Calu3 (cell line): ENCODE measurements at regions of chr13 and their contacts with region 1.

Region 1: GRCh38 chr13:33723772-33724435 is 94.0 kb upstream of the RFC3 start:
- DNase-seq: peak; percentile 60
- H3K4me3 Mint-ChIP-seq: no peak overlapping the region
- H3K27ac Mint-ChIP-seq: no peak overlapping the region
- H3K4me1 Mint-ChIP-seq: no peaks in the 10 kb centered on the region
- H3K27me3 Mint-ChIP-seq: no peaks in the 10 kb centered on the region
- CTCF ChIP-seq: no peak

Region 2: DNA sequence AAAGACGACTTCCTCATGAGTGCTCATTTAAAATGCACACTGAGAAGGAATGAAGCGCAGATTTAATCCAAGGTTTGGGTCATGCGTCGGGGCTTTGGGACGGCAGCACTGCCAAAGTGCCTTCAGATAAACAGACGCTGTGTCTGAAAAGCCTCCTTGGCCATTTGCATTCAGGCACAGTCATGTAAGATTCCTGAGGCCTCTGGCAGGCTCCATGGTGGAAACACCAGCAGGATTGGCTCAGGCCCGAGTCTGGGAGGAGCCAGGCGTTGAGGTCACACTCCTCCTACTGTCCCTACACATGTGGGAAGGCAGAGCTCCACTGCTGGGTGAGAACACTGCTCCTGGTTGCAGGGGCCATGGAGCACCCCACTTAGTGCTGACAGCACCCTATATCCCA is 821.0 kb before region 1 on chr13:
- CTCF ChIA-PET with region 1: no interaction called
- intact Hi-C with region 1: no loop called
- DNase-seq: no peak
- H3K4me3 Mint-ChIP-seq: no peak overlapping the region
- H3K27ac Mint-ChIP-seq: no peak overlapping the region
- H3K4me1 Mint-ChIP-seq: peaks cover 10% of the 10 kb centered on the region
- H3K27me3 Mint-ChIP-seq: no peaks in the 10 kb centered on the region
- CTCF ChIP-seq: no peak

Region 3: GRCh38 chr13:33494596-33495204 is 229.2 kb before region 1 on chr13:
- CTCF ChIA-PET with region 1: no interaction called
- intact Hi-C with region 1: no loop called
- DNase-seq: no peak
- H3K4me3 Mint-ChIP-seq: no peak overlapping the region
- H3K27ac Mint-ChIP-seq: peak overlapping the region; percentile 79
- H3K4me1 Mint-ChIP-seq: peaks cover 33% of the 10 kb centered on the region
- H3K27me3 Mint-ChIP-seq: no peaks in the 10 kb centered on the region
- CTCF ChIP-seq: no peak

Region 4: GRCh38 chr13:33542283-33543088 is 181.4 kb before region 1 on chr13:
- CTCF ChIA-PET with region 1: interaction called, 4 read pairs
- intact Hi-C with region 1: loop called (anchors 1 kb)
- DNase-seq: peak; percentile 96
- H3K4me3 Mint-ChIP-seq: peak overlapping the region; percentile 67
- H3K27ac Mint-ChIP-seq: peak overlapping the region; percentile 94
- H3K4me1 Mint-ChIP-seq: peaks cover 11% of the 10 kb centered on the region
- H3K27me3 Mint-ChIP-seq: no peaks in the 10 kb centered on the region
- CTCF ChIP-seq: peak; percentile 68

Region 5: DNA sequence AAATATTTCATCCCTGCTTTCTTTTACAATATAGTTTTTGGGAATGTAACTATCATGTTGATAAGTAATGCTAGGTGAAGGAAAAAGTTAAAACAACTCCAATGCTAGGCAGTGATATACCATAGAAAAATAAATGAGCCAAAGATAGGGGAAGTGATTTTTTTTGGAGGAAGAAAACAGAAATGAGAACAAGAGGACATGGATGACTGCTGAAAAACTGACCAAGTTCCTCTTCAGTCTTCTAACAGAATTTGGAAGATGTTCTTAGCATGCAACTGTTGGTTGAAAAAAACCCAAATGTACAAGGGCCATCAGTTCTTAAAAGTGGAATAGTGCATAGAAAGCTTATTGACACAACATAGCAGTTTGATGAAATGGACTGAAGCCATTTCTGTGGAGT is 175.8 kb before region 1 on chr13:
- CTCF ChIA-PET with region 1: interaction called, 4 read pairs
- intact Hi-C with region 1: loop called (anchors 1 kb)
- DNase-seq: no peak
- H3K4me3 Mint-ChIP-seq: no peak overlapping the region
- H3K27ac Mint-ChIP-seq: no peak overlapping the region
- H3K4me1 Mint-ChIP-seq: no peaks in the 10 kb centered on the region
- H3K27me3 Mint-ChIP-seq: no peaks in the 10 kb centered on the region
- CTCF ChIP-seq: no peak

Region 6: GRCh38 chr13:33571618-33572017 is 152.3 kb before region 1 on chr13:
- CTCF ChIA-PET with region 1: no interaction called
- intact Hi-C with region 1: loop called (anchors 5 kb)
- DNase-seq: no peak
- H3K4me3 Mint-ChIP-seq: no peak overlapping the region
- H3K27ac Mint-ChIP-seq: no peak overlapping the region
- H3K4me1 Mint-ChIP-seq: no peaks in the 10 kb centered on the region
- H3K27me3 Mint-ChIP-seq: no peaks in the 10 kb centered on the region
- CTCF ChIP-seq: no peak